ENCODE measurements at regions of chr16 and their contacts with region 1.

Region 1: DNA sequence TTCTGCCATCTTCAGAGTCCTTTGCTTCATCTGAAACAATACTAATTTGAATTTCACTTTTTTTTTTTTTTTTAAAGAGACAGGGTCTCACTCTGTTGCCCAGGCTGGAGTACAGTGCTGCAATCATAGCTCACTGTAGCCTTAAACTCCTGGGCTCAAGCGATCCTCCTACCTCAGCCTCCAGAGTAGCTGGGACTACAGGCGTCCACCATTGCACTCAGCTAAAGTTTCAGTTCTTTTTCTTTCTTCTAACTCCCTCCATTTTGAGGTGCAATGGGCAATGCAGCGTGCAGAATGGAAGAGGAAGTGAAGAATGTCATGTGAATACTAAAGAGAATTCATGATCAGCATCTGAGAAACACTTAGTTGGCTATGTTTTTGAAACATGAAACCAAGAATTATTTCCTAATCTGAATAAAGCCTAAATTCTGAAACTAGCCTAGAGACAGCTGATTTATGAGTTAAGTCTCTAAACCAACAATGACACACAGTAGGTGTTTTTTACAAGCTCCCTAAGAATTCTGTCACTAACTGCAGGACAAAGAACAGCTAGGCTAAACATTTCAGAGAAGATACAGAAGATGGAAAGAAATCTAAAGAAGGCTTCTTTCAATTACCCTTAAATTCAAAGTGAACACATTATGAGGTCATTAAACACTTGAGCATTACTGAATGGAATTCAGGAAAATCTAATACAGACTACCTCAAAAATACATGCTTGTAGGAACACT is 20.9 kb downstream of the SNN start:
- DNase-seq: peak; percentile 87
- ATAC-seq: peak; percentile 96
- H3K4me3 ChIP-seq: peak overlapping the region in 1 of 5 experiments; percentile 49
- H3K4me3 Mint-ChIP-seq: peak overlapping the region; percentile 88
- H3K27ac ChIP-seq: peak overlapping the region; percentile 80 to 89
- H3K27ac Mint-ChIP-seq: peak overlapping the region; percentile 98
- H3K4me1 ChIP-seq: peaks cover 70 to 71% of the 10 kb centered on the region in 2 donors
- H3K4me1 Mint-ChIP-seq: peaks cover 76% of the 10 kb centered on the region
- H3K27me3 ChIP-seq: no peaks in the 10 kb centered on the region
- H3K27me3 Mint-ChIP-seq: no peaks in the 10 kb centered on the region
- CTCF ChIP-seq: no peak

Region 2: DNA sequence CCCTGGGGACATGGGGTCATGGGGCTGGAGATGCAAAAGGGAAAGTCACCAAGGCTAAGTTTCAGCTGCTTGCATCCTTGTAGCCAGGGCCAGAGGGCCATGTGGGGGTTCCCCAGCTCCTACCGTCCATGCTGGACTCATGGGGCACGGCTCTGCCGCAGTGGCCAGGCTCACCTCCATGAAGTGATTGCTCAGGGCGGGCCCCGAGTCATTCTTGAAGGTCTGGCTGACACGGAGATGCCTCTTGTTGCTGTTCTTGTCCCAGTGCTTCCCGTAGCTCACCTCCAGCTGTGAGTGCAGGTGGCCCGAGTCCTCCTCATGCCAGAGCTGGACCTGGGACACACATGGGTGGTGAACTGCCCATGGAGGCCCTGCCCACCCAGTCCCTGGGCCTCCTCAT is 229.5 kb before region 1 on chr16:
- CTCF ChIA-PET with region 1: no interaction called
- POLR2A ChIA-PET with region 1: interaction called, 11 read pairs
- intact Hi-C with region 1: no loop called
- DNase-seq: no peak
- ATAC-seq: no peak
- H3K4me3 ChIP-seq: no peak overlapping the region
- H3K4me3 Mint-ChIP-seq: no peak overlapping the region
- H3K27ac ChIP-seq: no peak overlapping the region
- H3K27ac Mint-ChIP-seq: no peak overlapping the region
- H3K4me1 ChIP-seq: no peaks in the 10 kb centered on the region
- H3K4me1 Mint-ChIP-seq: peaks cover 2% of the 10 kb centered on the region
- H3K27me3 ChIP-seq: no peaks in the 10 kb centered on the region
- H3K27me3 Mint-ChIP-seq: no peaks in the 10 kb centered on the region
- CTCF ChIP-seq: no peak

Region 3: DNA sequence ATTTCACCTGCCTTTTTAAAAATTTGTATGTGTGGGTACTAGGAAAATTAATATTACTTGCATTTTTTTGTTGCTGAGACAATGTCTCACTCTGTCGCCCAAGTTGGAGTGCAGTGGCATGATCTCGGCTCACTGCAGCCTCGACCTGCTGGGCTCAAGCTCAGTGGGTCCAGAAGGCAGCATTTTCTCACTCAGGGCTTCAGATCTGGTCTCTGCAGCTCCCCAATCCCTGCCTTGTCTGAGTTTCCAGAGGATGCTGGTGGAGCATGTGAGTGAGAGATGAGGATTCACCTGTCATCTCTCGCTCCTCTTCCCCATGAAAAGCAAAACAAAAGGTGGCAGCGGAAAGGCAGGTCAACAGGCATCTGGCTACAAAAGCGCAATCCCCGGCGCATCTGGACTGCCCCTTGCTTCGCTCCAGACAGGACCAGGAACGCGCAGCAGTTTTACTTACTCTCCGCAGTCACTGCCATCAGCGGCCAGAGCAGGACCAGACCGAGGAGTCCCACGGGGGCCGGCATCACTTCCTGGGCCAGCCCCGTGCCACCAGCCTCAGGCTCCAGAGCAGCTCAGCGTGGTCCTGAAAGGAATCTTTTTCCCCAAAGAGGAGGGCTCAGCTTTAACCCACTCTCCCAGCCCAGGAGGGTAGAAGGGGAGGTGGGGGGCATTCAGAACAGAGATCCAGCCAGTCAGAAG is 162.4 kb before region 1 on chr16:
- CTCF ChIA-PET with region 1: interaction called, 18 read pairs
- POLR2A ChIA-PET with region 1: no interaction called
- intact Hi-C with region 1: no loop called
- DNase-seq: no peak
- ATAC-seq: no peak
- H3K4me3 ChIP-seq: no peak overlapping the region
- H3K4me3 Mint-ChIP-seq: no peak overlapping the region
- H3K27ac ChIP-seq: no peak overlapping the region
- H3K27ac Mint-ChIP-seq: no peak overlapping the region
- H3K4me1 ChIP-seq: no peaks in the 10 kb centered on the region
- H3K4me1 Mint-ChIP-seq: peaks cover 3% of the 10 kb centered on the region
- H3K27me3 ChIP-seq: peaks cover 0 to 4% (median 0%) of the 10 kb centered on the region in 4 experiments
- H3K27me3 Mint-ChIP-seq: peaks cover 8% of the 10 kb centered on the region
- CTCF ChIP-seq: no peak

Region 4: DNA sequence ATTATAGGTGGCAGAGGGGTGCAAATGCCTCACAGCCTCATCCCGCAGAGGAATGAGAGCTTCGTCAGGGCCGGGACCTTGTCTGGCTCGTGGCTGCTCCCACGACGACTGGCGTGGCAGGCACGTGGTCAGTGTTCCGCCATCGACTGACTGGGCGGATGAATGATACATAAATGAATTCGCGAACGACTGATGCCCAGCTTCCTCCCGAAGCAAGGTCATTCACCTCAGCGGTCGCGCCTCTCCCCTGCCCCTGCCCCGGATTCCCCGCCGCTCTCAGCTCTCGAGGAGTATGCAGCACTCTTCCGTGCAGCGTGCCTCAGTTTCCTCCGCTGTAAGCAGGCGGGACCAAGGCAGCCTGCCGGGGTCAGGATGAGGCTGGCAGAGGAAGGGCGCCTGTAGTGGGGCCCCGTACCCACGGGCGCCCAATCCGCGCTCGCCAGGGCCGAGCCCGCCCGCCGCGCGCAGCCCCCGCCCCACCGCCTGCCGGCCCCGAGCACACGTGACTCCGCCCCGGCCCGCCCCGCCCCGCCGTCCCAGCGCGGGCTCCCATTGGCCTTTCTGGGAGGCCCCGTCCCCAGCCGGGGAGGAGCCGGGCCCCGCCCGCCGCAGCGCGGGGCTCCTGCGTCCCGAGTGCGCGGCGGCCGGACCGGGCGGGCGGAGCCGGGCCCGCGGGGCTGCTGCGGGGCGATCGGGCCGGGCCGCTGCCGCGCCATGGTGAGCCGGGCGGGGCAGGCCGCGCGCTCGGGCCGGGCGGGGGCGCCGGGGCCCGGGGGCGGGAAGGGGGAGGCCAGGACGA is 21.2 kb before region 1 on chr16 and contains the start of gene SNN:
- CTCF ChIA-PET with region 1: interaction called, 10 read pairs
- POLR2A ChIA-PET with region 1: interaction called, 19 read pairs
- intact Hi-C with region 1: loop called (anchors 1 kb)
- DNase-seq: peak; percentile 90
- ATAC-seq: peak; percentile 76
- H3K4me3 ChIP-seq: peak within 1 kb of the TSS; percentile 68 to 90 (median 77)
- H3K4me3 Mint-ChIP-seq: peak within 1 kb of the TSS; percentile 91
- H3K27ac ChIP-seq: peak within 1 kb of the TSS; percentile 96 to 98
- H3K27ac Mint-ChIP-seq: peak within 1 kb of the TSS; percentile 93
- H3K4me1 ChIP-seq: peaks cover 54 to 73% of the 10 kb centered on the region in 2 donors
- H3K4me1 Mint-ChIP-seq: peaks cover 71% of the 10 kb centered on the region
- H3K27me3 ChIP-seq: no peaks in the 10 kb centered on the region
- H3K27me3 Mint-ChIP-seq: no peaks in the 10 kb centered on the region
- CTCF ChIP-seq: no peak
- total RNA-seq, gene SNN: 60.8 and 63.3 TPM in 2 replicates

Region 5: DNA sequence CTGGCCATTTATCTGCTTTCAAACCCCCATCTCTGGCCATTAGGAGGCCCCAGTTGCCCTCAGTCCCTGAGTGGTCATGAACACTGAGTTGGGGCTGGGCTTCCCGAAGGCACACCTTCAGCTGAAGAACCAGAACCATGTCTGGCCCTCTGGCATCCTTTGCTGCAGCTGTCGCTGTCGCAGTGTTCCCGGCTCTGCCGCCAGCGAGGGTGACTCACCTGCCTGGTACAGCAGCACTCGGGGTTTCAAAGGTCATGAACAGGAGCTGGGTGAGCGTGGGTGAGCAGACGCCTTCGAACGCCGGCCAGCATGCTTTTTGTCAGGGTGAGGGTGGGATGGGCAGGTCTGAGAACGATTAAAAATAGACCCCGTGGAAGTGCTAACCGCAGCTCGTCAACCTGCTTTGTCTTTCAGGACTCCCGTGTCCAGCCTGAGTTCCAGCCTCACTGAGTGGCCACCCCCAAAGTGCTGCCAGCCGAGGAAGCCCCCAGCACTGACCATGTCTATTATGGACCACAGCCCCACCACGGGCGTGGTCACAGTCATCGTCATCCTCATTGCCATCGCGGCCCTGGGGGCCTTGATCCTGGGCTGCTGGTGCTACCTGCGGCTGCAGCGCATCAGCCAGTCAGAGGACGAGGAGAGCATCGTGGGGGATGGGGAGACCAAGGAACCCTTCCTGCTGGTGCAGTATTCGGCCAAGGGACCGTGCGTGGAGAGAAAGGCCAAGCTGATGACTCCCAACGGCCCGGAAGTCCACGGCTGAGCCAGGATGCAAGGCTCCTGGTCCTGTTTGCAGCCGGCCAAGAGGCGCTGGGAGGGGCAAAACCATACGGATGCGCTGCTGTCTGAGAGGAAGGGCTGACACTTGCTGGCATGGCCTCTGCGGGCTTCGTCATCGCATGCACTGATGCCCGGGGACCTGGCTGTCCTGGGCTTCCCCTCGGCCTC is 13.4 kb before region 1 on chr16:
- CTCF ChIA-PET with region 1: interaction called, 4 read pairs
- POLR2A ChIA-PET with region 1: interaction called, 19 read pairs
- intact Hi-C with region 1: loop called (anchors 1 kb)
- DNase-seq: no peak
- ATAC-seq: no peak
- H3K4me3 ChIP-seq: no peak overlapping the region
- H3K4me3 Mint-ChIP-seq: peak overlapping the region; percentile 87
- H3K27ac ChIP-seq: peak overlapping the region; percentile 62 to 99
- H3K27ac Mint-ChIP-seq: peak overlapping the region; percentile 32
- H3K4me1 ChIP-seq: peaks cover 93 to 100% of the 10 kb centered on the region in 2 donors
- H3K4me1 Mint-ChIP-seq: peaks cover 98% of the 10 kb centered on the region
- H3K27me3 ChIP-seq: no peaks in the 10 kb centered on the region
- H3K27me3 Mint-ChIP-seq: no peaks in the 10 kb centered on the region
- CTCF ChIP-seq: no peak

Measured in B cell (primary cell).